ENCODE measurements at regions of chr10 and their contacts with region 1.

Region 1: GRCh38 chr10:63703113-63703670 is 182.0 kb downstream of the REEP3 start:
- DNase-seq: peak; percentile 41 to 71 (median 69)
- H3K4me3 ChIP-seq: no peak overlapping the region
- H3K27ac ChIP-seq: no peak overlapping the region
- H3K4me1 ChIP-seq: peaks cover 0 to 25% (median 5%) of the 10 kb centered on the region in 4 experiments
- H3K27me3 ChIP-seq: no peaks in the 10 kb centered on the region

Region 2: DNA sequence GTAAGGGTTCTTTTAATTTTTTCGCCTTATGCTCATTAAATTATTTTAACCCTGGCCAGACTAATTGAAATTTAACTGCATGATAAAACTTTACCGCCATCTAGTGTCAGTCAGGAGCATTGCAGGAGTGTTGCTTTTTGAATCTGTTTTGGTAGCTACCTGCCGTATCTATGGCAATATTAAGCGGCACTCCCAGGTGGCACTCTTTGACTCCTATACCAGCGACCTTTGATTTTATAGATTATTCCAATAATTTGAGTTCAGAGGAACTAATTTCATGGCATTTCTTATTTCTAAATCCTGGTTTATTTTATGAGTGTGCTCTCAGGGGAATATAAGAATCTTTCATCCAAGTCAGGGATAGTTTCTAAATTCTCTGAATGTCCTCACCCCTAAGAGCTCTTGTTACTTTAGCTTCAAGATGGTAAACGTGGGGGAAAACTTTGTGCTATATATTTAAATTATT is 16.9 kb after region 1 on chr10:
- CTCF ChIA-PET with region 1: interaction called, 11 read pairs
- POLR2A ChIA-PET with region 1: no interaction called
- DNase-seq: peak; percentile 56 to 73 (median 69)
- H3K4me3 ChIP-seq: no peak overlapping the region
- H3K27ac ChIP-seq: no peak overlapping the region
- H3K4me1 ChIP-seq: peaks cover 0 to 6% (median 0%) of the 10 kb centered on the region in 4 experiments
- H3K27me3 ChIP-seq: peaks cover 0 to 4% (median 0%) of the 10 kb centered on the region in 5 experiments